ENCODE measurements at regions of chr12 and their contacts with region 1.

Region 1: DNA sequence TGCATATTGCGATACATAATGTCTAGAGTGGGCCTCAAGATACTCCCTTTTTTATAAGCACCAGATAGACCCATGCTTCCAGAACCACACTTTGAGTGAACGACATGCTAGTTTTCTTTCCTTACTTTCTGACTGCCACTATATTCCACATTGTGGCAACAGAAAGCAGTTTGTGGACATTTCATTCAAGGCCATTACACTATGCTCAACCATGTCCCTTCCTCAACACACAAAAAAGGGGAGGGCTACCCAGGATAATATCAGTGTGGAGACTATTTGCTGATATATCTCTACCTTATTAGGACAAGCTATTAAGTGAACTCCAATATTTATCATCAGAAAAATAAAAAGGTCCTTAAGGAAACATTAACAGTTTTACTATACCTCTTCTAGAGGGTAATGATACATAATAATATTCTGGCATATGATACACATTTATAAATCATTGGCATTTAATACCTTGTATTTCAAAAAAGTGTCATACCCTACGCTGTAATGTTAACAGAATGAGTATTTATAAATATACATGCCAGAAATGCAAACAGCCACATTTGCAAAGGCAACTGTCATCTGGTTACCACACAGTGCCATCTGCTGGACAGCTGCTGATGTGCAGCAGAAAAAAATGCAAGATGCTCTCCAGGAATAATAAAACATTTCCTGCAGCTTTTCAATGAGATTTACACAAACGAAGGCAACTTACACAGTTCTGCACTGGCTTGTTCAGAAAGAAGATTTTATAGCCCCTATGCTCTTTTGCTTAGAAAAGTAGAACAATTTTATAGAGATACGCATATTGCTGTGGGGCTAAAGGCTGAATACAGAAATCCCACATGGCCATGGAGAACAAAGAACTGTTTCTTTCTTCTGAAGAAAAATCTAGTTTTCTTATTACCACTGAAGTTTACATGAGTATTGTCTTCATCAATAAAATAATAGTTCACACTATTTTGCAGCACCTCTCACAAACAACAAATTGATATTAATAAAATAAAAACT is 182.2 kb upstream of the GRIP1 start:
- DNase-seq: peak; percentile 82
- H3K4me3 Mint-ChIP-seq: no peak overlapping the region
- H3K27ac Mint-ChIP-seq: no peak overlapping the region
- H3K4me1 Mint-ChIP-seq: peaks cover 20% of the 10 kb centered on the region
- H3K27me3 Mint-ChIP-seq: no peaks in the 10 kb centered on the region

Region 2: DNA sequence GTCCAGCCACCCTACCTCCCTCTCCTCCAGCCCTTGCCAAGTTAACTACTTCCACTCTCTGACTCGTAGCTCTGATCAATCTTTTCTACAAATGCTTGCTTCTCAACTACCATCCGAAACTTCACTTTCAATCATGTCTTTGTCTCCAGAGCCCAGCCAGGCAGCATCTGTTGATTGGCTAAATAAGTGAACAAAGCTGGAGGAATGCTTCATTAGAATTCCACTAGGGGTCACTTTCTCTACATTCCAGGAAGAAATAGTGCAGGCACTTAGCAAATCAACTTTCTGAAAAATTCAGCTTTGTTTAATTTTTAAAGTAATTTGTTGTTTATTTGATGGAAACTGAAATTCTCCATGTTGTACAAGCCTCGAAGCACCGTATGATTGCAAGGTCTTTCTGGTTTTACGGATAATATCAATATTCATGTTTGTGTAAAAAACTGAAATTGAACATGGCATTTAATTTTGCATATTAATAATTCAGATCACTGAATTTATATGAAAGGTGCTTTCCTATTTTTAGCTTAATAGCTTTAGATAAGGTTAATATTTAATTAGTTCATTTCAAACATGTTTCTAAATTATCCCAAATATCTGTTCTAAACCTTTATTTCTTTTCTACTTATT is 591.2 kb before region 1 on chr12:
- CTCF ChIA-PET with region 1: interaction called, 3 read pairs
- intact Hi-C with region 1: loop called (anchors 2 kb)
- DNase-seq: peak; percentile 52
- H3K4me3 Mint-ChIP-seq: no peak overlapping the region
- H3K27ac Mint-ChIP-seq: no peak overlapping the region
- H3K4me1 Mint-ChIP-seq: peaks cover 5% of the 10 kb centered on the region
- H3K27me3 Mint-ChIP-seq: peaks cover 3% of the 10 kb centered on the region

Region 3: DNA sequence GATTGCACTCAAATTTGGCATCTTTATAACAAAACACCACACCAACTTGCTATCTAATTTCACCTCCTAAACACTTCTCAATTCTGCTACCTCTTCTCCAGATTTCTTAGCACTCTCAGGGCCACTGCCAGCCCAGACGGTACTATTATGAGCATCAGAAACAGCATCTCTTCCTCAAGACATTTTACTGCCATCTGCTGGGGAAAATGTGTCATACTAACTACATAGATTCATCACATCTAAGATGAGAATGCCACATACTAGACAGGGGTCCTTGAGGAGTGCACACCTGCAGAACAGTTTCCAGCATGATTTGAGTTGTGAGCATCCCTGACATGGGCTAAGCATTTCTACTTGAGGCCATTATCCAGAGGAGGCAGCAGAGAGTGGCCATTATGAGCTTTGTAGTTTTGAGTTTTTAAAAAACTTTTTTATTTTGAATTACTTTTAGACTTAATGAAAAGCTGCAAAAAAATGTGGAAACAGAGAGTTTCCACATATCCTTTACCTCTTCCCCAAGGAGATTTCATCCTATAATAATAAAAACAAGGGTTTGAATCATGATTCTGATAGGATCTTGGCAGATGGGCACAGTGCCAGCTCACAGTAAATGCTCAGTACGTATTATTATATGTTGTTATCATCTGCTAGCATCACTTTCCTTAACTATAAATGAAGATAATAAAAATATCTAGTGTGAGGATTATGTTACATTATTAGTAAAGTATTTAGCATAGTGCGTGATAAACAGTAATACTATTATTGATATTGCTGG is 167.0 kb before region 1 on chr12:
- CTCF ChIA-PET with region 1: interaction called, 21 read pairs
- intact Hi-C with region 1: loop called (anchors 1 kb)
- DNase-seq: peak; percentile 41
- H3K4me3 Mint-ChIP-seq: no peak overlapping the region
- H3K27ac Mint-ChIP-seq: no peak overlapping the region
- H3K4me1 Mint-ChIP-seq: peaks cover 13% of the 10 kb centered on the region
- H3K27me3 Mint-ChIP-seq: no peaks in the 10 kb centered on the region

Region 4: GRCh38 chr12:66717036-66717673 is 143.9 kb before region 1 on chr12:
- CTCF ChIA-PET with region 1: interaction called, 13 read pairs
- intact Hi-C with region 1: loop called (anchors 1 kb)
- DNase-seq: no peak
- H3K4me3 Mint-ChIP-seq: no peak overlapping the region
- H3K27ac Mint-ChIP-seq: no peak overlapping the region
- H3K4me1 Mint-ChIP-seq: peaks cover 32% of the 10 kb centered on the region
- H3K27me3 Mint-ChIP-seq: no peaks in the 10 kb centered on the region

Region 5: GRCh38 chr12:66836623-66837310 is 24.3 kb before region 1 on chr12:
- CTCF ChIA-PET with region 1: no interaction called
- intact Hi-C with region 1: loop called (anchors 2 kb)
- DNase-seq: no peak
- H3K4me3 Mint-ChIP-seq: no peak overlapping the region
- H3K27ac Mint-ChIP-seq: no peak overlapping the region
- H3K4me1 Mint-ChIP-seq: peaks cover 20% of the 10 kb centered on the region
- H3K27me3 Mint-ChIP-seq: no peaks in the 10 kb centered on the region